ENCODE measurements at regions of chr14 and their contacts with region 1.

Region 1: GRCh38 chr14:95895720-95896119 is 19.1 kb downstream of the TUNAR start:
- DNase-seq: peak; percentile 34 to 77
- H3K4me3 ChIP-seq: no peak overlapping the region
- H3K27ac ChIP-seq: no peak overlapping the region
- H3K4me1 ChIP-seq: peaks cover 8 to 19% (median 17%) of the 10 kb centered on the region in 4 experiments
- H3K27me3 ChIP-seq: no peaks in the 10 kb centered on the region
- CTCF ChIP-seq: peak; percentile 68 to 75 (median 72)
- EP300 ChIP-seq: no peak
- POLR2A ChIP-seq: no peak
- RAD21 ChIP-seq: peak; percentile 46 to 71

Region 2: DNA sequence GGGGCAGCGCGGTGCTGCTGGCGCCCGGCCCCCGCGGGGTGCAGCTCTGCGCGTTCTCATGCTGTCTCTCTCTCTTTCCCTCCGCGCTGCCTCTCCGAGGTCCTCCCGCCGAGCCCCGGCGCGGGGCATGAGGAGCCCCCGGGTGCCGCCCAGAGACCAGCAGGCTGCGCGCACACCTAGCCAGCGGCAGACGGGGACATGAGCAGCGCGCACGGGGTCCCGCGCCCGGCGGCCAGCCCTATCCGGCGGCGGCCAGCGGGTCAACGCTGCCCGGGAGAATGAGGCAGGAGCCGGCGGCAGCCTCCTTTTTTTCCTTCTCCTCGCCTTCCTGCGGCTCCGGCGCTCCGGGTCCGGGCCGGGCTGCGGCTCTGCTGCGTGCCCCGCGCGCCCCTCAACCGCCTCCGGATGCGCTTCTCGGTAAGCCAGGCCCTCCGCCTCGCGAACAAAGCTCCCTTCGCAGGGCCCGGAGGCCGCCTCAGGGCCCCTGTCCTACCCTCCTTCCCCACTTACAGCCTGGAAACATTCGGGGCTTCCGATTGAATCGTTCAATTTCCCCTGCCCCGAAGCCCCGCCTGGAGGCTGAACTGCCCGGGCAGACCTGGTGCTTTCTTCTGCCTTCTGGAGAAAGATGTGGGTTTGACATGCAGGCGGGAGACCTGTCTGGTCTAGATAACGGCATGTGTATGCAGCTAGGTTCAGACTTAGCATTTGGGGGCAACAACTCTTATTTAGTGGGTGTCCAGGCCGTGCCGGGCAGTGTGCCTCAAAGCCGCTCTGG is 18.8 kb before region 1 on chr14 and contains the start of gene TUNAR:
- CTCF ChIA-PET with region 1: interaction called, 90 read pairs
- POLR2A ChIA-PET with region 1: interaction called, 12 read pairs
- DNase-seq: peak in 1 of 2 experiments; percentile 70
- H3K4me3 ChIP-seq: peak within 1 kb of the TSS; percentile 47 to 77 (median 66)
- H3K27ac ChIP-seq: no peak within 1 kb of the TSS
- H3K4me1 ChIP-seq: peaks cover 9 to 23% (median 19%) of the 10 kb centered on the region in 4 experiments; a peak in 6 of 7 replicates
- H3K27me3 ChIP-seq: peaks cover 0 to 10% (median 6%) of the 10 kb centered on the region in 4 experiments; a peak in 5 of 7 replicates
- CTCF ChIP-seq: no peak
- EP300 ChIP-seq: no peak
- POLR2A ChIP-seq: no peak; a peak in 1 of 3 replicates
- RAD21 ChIP-seq: no peak
- total RNA-seq, gene TUNAR: 63.7 and 63.9 TPM in 2 replicates

Region 3: DNA sequence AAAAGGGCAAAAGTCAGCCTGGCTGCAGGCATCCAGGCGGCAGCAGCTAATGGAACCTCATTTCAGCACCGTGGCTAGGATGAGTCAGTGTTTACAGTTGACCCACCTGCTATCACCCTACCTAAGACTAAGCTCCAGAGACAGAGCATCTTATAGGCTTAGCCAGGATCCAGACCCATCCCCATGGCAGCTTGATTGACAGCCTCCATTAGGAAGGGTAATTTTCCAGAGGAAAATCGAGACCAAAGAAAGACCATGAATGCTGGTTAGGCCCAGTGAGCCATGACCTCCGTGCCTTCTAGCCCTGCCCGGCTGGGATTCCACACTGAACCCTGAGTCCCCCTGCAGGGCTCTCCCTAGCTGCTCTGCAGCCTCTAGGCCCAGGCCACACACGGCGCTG is 19.6 kb after region 1 on chr14:
- CTCF ChIA-PET with region 1: interaction called, 16 read pairs
- POLR2A ChIA-PET with region 1: interaction called, 10 read pairs
- DNase-seq: peak; percentile 33 to 64
- H3K4me3 ChIP-seq: no peak overlapping the region
- H3K27ac ChIP-seq: no peak overlapping the region
- H3K4me1 ChIP-seq: peaks cover 8 to 16% (median 12%) of the 10 kb centered on the region in 4 experiments
- H3K27me3 ChIP-seq: no peaks in the 10 kb centered on the region
- CTCF ChIP-seq: peak; percentile 4 to 19 (median 16); a peak in 3 of 4 replicates
- EP300 ChIP-seq: no peak
- POLR2A ChIP-seq: no peak
- RAD21 ChIP-seq: peak; percentile 13 to 20; a peak in 1 of 4 replicates

Region 4: DNA sequence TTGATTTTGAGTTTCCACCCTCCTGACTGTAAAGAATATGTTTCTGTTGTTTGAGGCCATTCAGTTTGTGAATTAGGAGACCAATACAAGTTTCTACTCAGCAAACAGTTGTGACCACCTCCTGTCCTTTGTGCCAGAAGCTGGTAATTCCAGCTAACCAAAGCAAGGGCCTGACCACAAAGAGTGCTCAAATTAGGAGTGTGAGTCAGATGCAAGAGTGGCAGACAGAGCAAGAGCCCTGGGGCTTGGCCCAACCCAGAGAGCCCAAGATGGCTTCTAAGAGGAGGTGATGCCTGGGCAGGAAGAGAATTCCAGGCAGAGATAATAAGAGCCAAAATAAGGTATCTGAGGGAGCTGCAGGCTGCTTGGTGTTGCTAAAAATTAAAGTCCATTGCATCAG is 65.8 kb after region 1 on chr14:
- CTCF ChIA-PET with region 1: interaction called, 12 read pairs
- POLR2A ChIA-PET with region 1: interaction called, 3 read pairs
- DNase-seq: no peak
- H3K4me3 ChIP-seq: no peak overlapping the region
- H3K27ac ChIP-seq: no peak overlapping the region
- H3K4me1 ChIP-seq: peaks cover 0 to 15% (median 9%) of the 10 kb centered on the region in 4 experiments; a peak in 4 of 7 replicates
- H3K27me3 ChIP-seq: no peaks in the 10 kb centered on the region
- CTCF ChIP-seq: no peak
- EP300 ChIP-seq: no peak
- POLR2A ChIP-seq: no peak
- RAD21 ChIP-seq: no peak

Measured in H1 (cell line).